ENCODE measurements at regions of chr2 and their contacts with region 1.

Region 1: DNA sequence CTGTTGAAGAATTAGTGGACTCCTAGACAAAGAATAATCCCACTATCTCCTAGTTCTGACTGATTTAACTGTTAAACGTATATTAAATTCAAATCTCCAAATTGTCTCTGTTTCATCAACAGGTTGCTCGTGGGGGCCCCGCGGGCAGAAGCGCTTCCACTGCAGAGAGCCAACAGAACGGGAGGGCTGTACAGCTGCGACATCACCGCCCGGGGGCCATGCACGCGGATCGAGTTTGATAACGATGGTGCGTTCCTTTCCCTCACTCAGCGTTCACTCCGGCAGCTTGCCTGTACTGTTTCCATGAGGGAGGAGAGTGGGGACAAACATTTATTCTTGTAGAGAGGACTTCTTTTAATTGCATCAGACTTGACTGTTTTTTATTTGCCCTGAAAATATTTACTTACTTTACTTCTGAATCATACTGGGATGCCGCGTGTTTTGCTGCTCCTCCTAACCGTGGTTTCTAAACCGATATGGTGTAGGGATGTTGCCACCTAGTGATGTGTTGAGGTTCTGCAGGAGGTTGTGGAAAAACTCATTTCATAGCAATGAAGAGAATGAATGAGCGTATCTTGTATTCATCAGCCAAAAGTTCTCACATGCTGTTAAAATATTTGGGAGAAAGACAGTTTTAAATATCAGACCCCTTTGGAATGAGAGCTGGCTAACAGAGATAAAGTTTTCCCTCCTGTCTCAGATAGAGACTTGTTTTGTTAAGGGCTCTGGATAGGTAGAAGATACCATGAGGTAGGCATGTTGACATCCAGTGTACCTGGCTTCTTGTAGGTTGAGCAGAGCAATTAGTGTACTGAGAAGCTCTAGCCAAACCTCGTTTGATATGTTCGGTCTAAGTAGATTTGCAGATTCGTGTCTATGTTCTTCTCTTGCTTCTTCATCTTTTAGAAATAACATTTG is 38.3 kb downstream of the ITGA6 start:
- DNase-seq: peak; percentile 29 to 88 (median 72)
- ATAC-seq: peak; percentile 18 to 20
- H3K4me3 Mint-ChIP-seq: peak overlapping the region; percentile 48 to 94 (median 84)
- H3K27ac Mint-ChIP-seq: peak overlapping the region; percentile 74 to 98 (median 95)
- H3K4me1 Mint-ChIP-seq: peaks cover 38 to 77% (median 66%) of the 10 kb centered on the region in 4 donors
- H3K27me3 Mint-ChIP-seq: no peaks in the 10 kb centered on the region

Region 2: DNA sequence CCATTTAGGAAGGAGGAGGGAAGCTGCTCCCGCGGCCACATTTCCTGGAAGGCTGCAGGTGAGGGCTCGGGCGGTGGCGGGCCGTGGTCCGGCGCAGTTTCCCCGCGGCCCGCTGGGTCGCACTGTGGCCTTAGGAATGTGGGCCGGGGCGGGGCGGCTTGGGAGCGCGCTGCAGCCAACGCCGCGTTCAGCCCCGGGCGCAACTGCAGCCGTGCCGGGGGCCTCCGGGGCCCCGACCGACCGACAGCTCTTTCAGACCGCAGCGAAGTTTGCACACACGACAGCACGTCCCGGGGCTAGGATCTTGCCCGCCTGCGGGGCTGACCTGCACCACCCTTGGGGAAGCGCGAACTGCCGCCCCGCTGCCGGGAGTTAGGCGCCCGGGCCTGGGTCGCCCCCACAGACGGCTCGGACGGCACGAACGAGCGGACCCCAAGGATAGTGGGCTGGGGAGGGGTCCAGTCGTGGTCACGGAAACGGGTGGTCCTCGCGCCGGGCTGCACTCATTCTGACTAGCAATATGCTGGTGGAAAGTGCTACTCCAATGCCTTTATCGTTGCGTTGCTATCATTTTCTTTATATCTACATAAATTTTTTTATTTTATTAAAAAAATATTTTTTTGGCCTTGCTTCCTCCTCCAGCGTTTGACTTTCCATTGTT is 293.0 kb before region 1 on chr2:
- POLR2A ChIA-PET with region 1: interaction called, 33 read pairs
- DNase-seq: peak; percentile 36 to 71 (median 61)
- ATAC-seq: peak; percentile 90 to 98
- H3K4me3 Mint-ChIP-seq: peak overlapping the region; percentile 68 to 83 (median 79)
- H3K27ac Mint-ChIP-seq: peak overlapping the region in 2 of 10 donors; percentile 25 to 74
- H3K4me1 Mint-ChIP-seq: peaks cover 2 to 10% (median 6%) of the 10 kb centered on the region in 4 donors
- H3K27me3 Mint-ChIP-seq: peaks cover 0 to 8% (median 0%) of the 10 kb centered on the region in 5 donors

Region 3: DNA sequence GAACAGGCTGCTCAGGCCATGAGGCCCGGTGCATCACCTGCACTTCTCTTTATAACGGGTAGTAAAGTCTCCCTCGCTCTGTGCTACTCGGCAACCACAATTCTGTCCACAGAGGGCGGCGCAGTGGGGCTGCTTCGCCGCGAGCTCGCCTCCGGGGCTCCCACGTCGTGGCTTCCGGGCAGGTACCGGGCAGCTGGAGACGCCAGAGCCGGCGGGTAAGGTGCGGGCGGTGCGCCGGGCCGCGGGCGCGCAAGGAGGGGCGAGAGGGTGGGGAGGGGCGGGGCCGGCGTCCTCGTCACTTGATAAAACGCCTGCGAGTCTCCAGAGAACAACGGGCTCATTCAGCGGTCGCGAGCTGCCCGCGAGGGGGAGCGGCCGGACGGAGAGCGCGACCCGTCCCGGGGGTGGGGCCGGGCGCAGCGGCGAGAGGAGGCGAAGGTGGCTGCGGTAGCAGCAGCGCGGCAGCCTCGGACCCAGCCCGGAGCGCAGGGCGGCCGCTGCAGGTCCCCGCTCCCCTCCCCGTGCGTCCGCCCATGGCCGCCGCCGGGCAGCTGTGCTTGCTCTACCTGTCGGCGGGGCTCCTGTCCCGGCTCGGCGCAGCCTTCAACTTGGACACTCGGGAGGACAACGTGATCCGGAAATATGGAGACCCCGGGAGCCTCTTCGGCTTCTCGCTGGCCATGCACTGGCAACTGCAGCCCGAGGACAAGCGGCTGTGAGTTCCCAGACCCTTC is 38.3 kb before region 1 on chr2 and contains the start of gene ITGA6:
- POLR2A ChIA-PET with region 1: interaction called, 304 read pairs
- DNase-seq: peak; percentile 54 to 86 (median 76)
- ATAC-seq: peak; percentile 70 to 74
- H3K4me3 Mint-ChIP-seq: peak within 1 kb of the TSS in 9 of 10 donors; percentile 90 to 99 (median 97)
- H3K27ac Mint-ChIP-seq: peak within 1 kb of the TSS; percentile 73 to 96 (median 93)
- H3K4me1 Mint-ChIP-seq: peaks cover 25 to 34% (median 28%) of the 10 kb centered on the region in 4 donors
- H3K27me3 Mint-ChIP-seq: no peaks in the 10 kb centered on the region
- polyA plus RNA-seq, gene ITGA6: 58.4 to 80.0 (median 64.2) TPM

Region 4: DNA sequence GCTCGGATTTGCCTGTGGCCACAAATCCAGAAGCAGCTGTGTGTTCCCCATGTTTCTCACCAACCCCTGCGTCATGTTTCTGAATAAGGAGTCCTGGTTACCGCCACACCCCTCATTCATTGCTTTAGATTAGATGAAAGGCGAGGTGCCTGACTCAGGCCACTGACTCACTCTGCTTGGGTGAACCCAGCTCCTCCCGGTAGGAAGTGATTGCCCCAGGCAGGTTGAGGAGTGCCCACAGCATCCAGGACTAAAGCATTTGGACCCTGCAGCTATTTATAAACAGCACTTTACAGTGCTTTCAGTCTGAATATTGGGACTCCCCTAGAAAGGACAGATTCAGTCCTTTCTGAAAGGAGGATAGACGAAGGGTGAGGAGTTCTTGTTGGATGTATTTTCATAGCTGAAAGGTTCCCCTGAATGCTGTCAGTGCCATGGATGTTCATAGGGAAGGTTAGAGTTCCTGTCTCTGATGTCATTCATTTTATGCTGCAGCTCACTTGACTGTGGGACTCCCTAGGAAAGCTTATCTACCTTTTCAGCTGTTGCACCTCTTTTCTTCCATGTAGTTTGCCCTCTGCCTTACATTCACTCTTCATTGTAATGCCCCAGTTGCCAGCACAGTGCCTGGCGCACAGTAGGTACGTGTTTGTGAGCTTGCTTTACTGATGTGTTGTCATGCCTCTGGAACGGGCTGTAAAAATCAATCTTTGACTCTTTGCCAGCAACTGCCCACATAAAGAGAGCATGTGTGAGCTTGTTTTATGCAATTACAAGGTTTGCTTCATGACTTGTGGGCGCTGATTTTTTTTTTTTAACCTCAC is 23.4 kb before region 1 on chr2:
- POLR2A ChIA-PET with region 1: interaction called, 91 read pairs
- DNase-seq: peak in 8 of 10 donors; percentile 24 to 67 (median 58)
- ATAC-seq: peak; percentile 49 to 64
- H3K4me3 Mint-ChIP-seq: peak overlapping the region; percentile 77 to 95 (median 88)
- H3K27ac Mint-ChIP-seq: peak overlapping the region; percentile 30 to 98 (median 88)
- H3K4me1 Mint-ChIP-seq: peaks cover 17 to 57% (median 45%) of the 10 kb centered on the region in 4 donors
- H3K27me3 Mint-ChIP-seq: no peaks in the 10 kb centered on the region

Region 5: GRCh38 chr2:172484253-172484652 is 18.6 kb after region 1 on chr2:
- POLR2A ChIA-PET with region 1: interaction called, 17 read pairs
- DNase-seq: peak in 4 of 10 donors; percentile 26 to 61 (median 54)
- ATAC-seq: peak; percentile 58 to 65
- H3K4me3 Mint-ChIP-seq: peak overlapping the region in 8 of 10 donors; percentile 5 to 65 (median 44)
- H3K27ac Mint-ChIP-seq: peak overlapping the region; percentile 74 to 88 (median 80)
- H3K4me1 Mint-ChIP-seq: peaks cover 41 to 81% (median 72%) of the 10 kb centered on the region in 4 donors
- H3K27me3 Mint-ChIP-seq: no peaks in the 10 kb centered on the region

Region 6: GRCh38 chr2:172762574-172762973 is 296.9 kb after region 1 on chr2:
- POLR2A ChIA-PET with region 1: no interaction called
- DNase-seq: no peak
- ATAC-seq: no peak
- H3K4me3 Mint-ChIP-seq: no peak overlapping the region
- H3K27ac Mint-ChIP-seq: no peak overlapping the region
- H3K4me1 Mint-ChIP-seq: no peaks in the 10 kb centered on the region
- H3K27me3 Mint-ChIP-seq: peaks cover 0 to 3% (median 0%) of the 10 kb centered on the region in 5 donors